ENCODE measurements at regions of chr21 and their contacts with region 1.

Region 1: DNA sequence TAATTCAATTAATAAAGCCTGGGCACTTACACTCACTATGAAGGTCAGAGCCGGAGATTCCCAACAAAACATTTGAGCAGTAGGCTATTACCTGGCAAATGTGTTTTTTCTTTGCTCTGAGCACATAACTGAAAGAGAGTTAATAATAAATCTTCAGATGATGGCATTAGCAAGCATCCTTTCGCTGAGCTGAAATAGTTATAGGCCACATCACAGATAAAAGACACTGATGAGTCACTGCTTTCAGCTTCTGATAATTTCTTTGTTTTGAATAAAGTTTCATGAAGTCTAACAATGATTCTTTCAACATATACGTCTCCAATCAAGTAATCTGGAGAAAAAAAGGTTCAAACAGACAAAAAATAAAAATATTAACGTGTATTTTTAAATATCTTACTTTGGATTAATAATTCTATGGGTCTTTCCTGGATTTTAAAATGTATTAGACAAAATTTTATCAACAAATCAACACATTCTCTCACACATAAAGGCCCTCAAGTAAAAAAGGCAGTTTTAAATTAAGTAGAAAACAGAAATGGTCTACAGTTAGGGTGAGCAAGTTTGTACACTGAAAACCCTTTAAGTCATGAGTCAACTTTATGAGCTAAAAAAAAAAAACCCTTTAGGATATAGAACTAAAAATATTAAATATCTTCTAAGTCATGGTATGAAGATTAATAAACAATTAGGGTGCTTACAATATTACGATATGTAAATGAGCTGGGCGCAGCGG is 33.1 kb downstream of the LTN1 start:
- DNase-seq: no peak

Region 2: GRCh38 chr21:29073222-29074006 is 113.9 kb after region 1 on chr21 and contains the start of gene CCT8:
- in situ Hi-C with region 1: loop called (anchors 25 kb)
- DNase-seq: peak; percentile 100
- total RNA-seq, gene CCT8: 1,037 and 1,164 TPM in 2 replicates